Gastrocnemius medialis (tissue), 4 donors: ENCODE measurements at regions of chr2 and their contacts with region 1.

Region 1: DNA sequence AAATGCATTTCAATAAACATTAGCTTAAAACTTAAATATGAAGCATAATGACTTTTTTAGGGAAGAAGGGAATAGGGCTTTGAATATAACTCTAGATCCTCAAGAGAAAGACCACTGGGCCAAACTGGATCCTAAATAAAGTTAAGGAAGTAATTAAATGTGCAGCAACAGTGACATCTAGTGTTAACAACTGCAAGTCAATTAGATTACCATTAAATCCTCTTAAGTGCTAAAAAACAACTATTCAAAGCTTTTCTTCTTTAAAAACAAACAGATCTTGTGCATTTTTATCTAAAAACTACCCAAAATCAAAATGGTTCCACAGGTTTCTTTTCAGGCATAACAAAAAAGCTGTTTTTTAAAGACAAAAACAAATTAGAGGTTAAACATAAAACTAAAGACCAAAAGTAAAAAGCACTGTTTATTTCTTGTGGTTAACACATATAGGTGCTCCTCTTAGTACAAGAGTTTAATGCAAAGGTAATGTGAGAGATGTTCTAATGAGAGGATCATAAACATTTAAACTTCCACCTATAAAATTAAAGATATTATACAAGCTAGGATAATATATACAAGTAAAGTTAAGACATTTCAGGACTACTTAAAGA is 111.4 kb downstream of the THADA start:
- DNase-seq: no peak
- ATAC-seq: peak in 1 of 2 donors; percentile 59
- H3K4me3 ChIP-seq: no peak overlapping the region
- H3K27ac ChIP-seq: peak overlapping the region; percentile 68 to 79 (median 76)
- H3K4me1 ChIP-seq: peaks cover 29 to 34% of the 10 kb centered on the region in 2 donors
- H3K27me3 ChIP-seq: no peaks in the 10 kb centered on the region
- CTCF ChIP-seq: peak; percentile 66 to 88 (median 70)
- POLR2A ChIP-seq: no peak

Region 2: DNA sequence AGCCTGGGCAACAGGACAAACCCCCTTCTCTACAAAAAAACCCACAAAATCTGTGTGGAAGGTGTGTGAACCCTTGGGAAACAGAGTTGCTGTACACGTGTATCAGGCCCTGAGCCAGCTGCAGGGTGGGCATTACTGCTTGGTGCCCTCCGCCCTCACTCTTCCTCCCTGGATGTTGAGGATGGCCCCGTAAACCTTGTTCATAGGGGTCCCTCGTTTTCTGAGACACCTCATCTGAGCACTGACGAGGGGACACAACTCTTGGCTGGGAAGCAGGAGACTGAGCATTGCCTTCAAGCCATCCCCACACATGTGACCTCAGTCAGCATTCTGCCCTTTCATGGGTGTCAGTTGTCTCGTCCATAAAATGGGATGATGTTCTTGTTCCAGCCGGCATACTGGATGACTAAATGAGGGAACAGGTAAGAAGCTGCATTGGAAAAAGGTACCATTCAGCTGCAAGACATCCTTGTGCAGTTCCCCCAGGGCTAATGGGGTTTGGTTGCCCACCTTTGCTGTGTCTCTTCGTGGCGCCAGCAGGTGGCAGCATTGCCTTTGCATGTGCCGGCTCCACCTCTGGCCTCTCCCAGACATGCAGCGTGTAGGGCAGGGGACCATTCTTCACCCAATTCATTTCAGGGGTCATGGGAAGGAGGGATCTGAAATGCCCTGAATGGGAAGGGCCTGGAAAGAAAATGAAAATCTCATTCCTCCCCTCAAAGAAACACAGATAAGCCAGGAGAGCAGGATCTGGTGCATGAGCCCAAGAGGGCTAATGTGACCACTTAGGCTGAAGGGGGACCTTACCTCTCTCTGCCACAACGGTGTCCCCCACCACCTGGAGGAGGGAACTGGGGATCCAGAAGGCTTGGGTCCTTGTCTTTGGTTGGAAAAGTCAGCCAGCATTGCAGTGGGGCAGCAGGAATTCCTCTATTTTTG is 655.7 kb before region 1 on chr2:
- in situ Hi-C with region 1: loop called in 3 of 4 experiments (anchors 10 kb)
- intact Hi-C with region 1: loop called (anchors 2 kb)
- DNase-seq: peak; percentile 43 to 62
- ATAC-seq: peak; percentile 64 to 78
- H3K4me3 ChIP-seq: no peak overlapping the region
- H3K27ac ChIP-seq: peak overlapping the region in 1 of 4 donors; percentile 63
- H3K4me1 ChIP-seq: peaks cover 11 to 17% of the 10 kb centered on the region in 2 donors
- H3K27me3 ChIP-seq: no peaks in the 10 kb centered on the region
- CTCF ChIP-seq: peak; percentile 75 to 91 (median 87)
- POLR2A ChIP-seq: no peak

Region 3: GRCh38 chr2:42944779-42945415 is 539.5 kb before region 1 on chr2:
- in situ Hi-C with region 1: loop called in 3 of 4 experiments (anchors 5 to 10 kb)
- intact Hi-C with region 1: loop called (anchors 2 kb)
- DNase-seq: no peak
- ATAC-seq: no peak
- H3K4me3 ChIP-seq: no peak overlapping the region
- H3K27ac ChIP-seq: no peak overlapping the region
- H3K4me1 ChIP-seq: peaks cover 5 to 10% of the 10 kb centered on the region in 2 donors
- H3K27me3 ChIP-seq: no peaks in the 10 kb centered on the region
- CTCF ChIP-seq: no peak
- POLR2A ChIP-seq: no peak

Region 4: GRCh38 chr2:43024515-43025011 is 459.9 kb before region 1 on chr2:
- in situ Hi-C with region 1: no loop called
- intact Hi-C with region 1: loop called (anchors 5 kb)
- DNase-seq: peak; percentile 27 to 57
- ATAC-seq: peak; percentile 43 to 54
- H3K4me3 ChIP-seq: no peak overlapping the region
- H3K27ac ChIP-seq: no peak overlapping the region
- H3K4me1 ChIP-seq: peaks cover 3 to 7% of the 10 kb centered on the region in 2 donors
- H3K27me3 ChIP-seq: no peaks in the 10 kb centered on the region
- CTCF ChIP-seq: peak; percentile 57 to 90 (median 84)
- POLR2A ChIP-seq: no peak

Region 5: DNA sequence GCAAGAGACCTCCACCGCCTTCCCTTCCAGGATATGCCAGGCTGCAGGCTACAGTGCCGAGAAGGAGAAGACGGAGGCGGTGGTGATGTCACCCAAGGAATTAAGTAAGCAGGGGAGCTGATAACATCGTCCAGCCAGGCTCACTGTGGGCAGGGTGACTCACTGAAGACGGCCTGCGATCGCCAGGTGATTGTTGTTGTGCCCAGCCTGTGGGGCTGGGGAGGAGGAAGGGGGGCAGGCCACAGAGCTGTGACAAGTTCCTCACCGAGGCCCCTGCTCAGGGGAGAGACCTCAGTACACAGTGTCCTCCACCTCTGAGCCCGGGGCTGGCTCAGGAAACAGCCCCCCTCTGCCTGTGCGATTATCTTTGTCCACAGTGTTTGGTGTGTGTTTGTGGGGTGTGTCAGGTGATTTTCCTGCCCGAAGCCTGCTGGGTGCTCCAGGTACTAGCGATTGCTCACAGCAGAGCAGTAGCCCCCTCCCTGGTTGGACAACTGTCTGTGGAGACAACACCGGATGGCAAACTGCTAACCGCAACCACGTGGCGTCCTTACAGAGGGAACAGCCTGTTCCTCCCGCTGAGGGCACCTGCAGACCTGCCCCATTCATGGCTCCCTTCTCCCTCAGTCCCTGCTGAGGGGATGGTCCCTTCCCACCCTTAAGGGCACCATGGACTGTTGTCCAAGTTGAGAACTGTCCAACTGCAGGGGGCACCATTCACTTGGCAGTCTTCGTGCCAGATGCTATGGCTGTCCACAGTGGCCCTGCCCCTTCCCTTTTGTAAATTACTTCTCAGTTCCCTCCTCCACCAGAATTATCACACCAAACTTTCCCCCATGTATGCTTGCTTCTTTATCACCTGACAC is 353.2 kb before region 1 on chr2:
- in situ Hi-C with region 1: loop called in 2 of 4 experiments (anchors 10 kb)
- intact Hi-C with region 1: loop called (anchors 5 kb)
- DNase-seq: peak; percentile 92 to 95
- ATAC-seq: peak; percentile 82 to 84
- H3K4me3 ChIP-seq: no peak overlapping the region
- H3K27ac ChIP-seq: peak overlapping the region; percentile 36 to 88 (median 80)
- H3K4me1 ChIP-seq: peaks cover 16 to 28% of the 10 kb centered on the region in 2 donors
- H3K27me3 ChIP-seq: no peaks in the 10 kb centered on the region
- CTCF ChIP-seq: peak; percentile 12 to 55 (median 47)
- POLR2A ChIP-seq: peak in 1 of 2 donors; percentile 27

Region 6: DNA sequence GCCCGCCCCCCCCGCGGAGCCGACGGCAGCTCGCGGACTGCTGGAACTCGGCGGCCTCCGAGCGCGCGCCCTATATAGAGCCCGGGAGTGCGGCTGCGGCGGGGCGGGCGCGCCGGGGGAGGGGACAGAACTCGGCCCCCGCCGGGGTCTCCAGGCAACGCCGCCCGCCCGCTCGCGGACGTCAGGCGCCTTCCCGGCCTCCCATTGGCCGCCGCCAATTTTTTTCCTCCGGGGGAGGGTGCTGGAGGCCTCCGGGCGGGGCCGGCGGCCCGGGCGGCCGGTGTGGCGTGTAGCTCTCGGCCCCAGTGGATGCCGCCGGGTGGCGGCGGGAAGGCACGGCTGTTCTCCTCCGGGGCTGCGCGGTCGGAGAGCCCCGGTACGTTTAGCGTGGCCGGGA is 257.9 kb before region 1 on chr2 and contains the start of gene ZFP36L2:
- in situ Hi-C with region 1: loop called (anchors 5 kb)
- intact Hi-C with region 1: loop called (anchors 1 kb)
- DNase-seq: peak; percentile 94 to 95
- ATAC-seq: peak; percentile 59 to 61
- H3K4me3 ChIP-seq: peak within 1 kb of the TSS; percentile 76 to 99 (median 96)
- H3K27ac ChIP-seq: peak within 1 kb of the TSS; percentile 99 to 100 (median 100)
- H3K4me1 ChIP-seq: peaks cover 34 to 41% of the 10 kb centered on the region in 2 donors
- H3K27me3 ChIP-seq: no peaks in the 10 kb centered on the region
- CTCF ChIP-seq: no peak
- POLR2A ChIP-seq: peak; percentile 97 to 100
- total RNA-seq, gene ZFP36L2: 15.5 to 58.6 (median 44.8) TPM

Region 7: DNA sequence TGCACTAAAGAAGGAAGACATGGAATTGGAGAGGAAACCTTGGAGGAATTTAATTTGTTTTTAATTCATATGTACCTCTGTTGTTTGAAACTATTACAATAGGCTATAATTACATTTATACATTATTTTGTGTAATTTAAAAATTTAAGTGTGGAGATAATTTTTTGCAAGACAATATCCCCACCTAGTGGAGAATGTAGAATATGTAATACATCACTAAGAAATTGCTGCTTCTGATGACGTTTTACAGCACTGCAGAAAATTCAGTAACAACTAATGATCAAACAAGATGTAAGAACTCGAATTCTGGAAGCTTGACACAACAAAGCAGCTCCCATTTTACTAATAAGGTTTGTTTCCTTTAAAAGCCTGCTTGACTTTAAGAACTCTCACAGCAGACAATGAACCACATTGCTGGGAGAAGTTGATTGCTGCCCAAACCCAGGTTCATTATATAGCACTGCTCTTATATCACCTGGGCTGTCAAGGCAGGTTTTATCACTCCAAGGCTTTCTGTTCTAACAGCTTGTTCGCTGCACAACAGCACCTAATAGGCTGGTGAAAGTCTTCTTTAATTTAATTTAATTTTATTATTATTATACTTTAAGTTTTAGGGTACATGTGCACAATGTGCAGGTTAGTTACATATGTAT is 58.0 kb after region 1 on chr2:
- in situ Hi-C with region 1: no loop called
- intact Hi-C with region 1: loop called (anchors 5 kb)
- DNase-seq: no peak
- ATAC-seq: no peak
- H3K4me3 ChIP-seq: no peak overlapping the region
- H3K27ac ChIP-seq: no peak overlapping the region
- H3K4me1 ChIP-seq: peaks cover 6 to 11% of the 10 kb centered on the region in 2 donors
- H3K27me3 ChIP-seq: no peaks in the 10 kb centered on the region
- CTCF ChIP-seq: peak; percentile 52 to 63 (median 61)
- POLR2A ChIP-seq: no peak

Region 8: GRCh38 chr2:43798300-43798699 is 313.9 kb after region 1 on chr2:
- in situ Hi-C with region 1: no loop called
- intact Hi-C with region 1: no loop called
- DNase-seq: no peak
- ATAC-seq: no peak
- H3K4me3 ChIP-seq: no peak overlapping the region
- H3K27ac ChIP-seq: no peak overlapping the region
- H3K4me1 ChIP-seq: no peaks in the 10 kb centered on the region
- H3K27me3 ChIP-seq: no peaks in the 10 kb centered on the region
- CTCF ChIP-seq: no peak
- POLR2A ChIP-seq: no peak